Colonic mucosa (tissue), 4 donors: ENCODE measurements at regions of chr6 and their contacts with region 1.

Region 1: DNA sequence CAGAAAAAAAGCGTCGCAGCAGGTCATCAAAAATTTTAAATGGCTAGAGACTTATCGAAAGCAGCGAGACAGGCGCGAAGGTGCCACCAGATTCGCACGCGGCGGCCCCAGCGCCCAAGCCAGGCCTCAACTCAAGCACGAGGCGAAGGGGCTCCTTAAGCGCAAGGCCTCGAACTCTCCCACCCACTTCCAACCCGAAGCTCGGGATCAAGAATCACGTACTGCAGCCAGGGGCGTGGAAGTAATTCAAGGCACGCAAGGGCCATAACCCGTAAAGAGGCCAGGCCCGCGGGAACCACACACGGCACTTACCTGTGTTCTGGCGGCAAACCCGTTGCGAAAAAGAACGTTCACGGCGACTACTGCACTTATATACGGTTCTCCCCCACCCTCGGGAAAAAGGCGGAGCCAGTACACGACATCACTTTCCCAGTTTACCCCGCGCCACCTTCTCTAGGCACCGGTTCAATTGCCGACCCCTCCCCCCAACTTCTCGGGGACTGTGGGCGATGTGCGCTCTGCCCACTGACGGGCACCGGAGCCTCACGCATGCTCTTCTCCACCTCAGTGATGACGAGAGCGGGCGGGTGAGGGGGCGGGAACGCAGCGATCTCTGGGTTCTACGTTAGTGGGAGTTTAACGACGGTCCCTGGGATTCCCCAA is at the start of gene EEF1A1:
- DNase-seq: peak; percentile 100
- H3K4me3 ChIP-seq: peak within 1 kb of the TSS; percentile 77
- H3K27ac ChIP-seq: peak within 1 kb of the TSS; percentile 99
- H3K4me1 ChIP-seq: peaks cover 3% of the 10 kb centered on the region
- H3K27me3 ChIP-seq: no peaks in the 10 kb centered on the region
- CTCF ChIP-seq: no peak
- total RNA-seq, gene EEF1A1: 7,049 to 8,990 TPM

Region 2: GRCh38 chr6:73461537-73462350 is 59.1 kb before region 1 on chr6 and contains the start of gene MTO1:
- intact Hi-C with region 1: loop called (anchors 5 kb)
- DNase-seq: peak; percentile 96
- H3K4me3 ChIP-seq: peak within 1 kb of the TSS; percentile 69
- H3K27ac ChIP-seq: peak within 1 kb of the TSS; percentile 86
- H3K4me1 ChIP-seq: peaks cover 6% of the 10 kb centered on the region
- H3K27me3 ChIP-seq: no peaks in the 10 kb centered on the region
- CTCF ChIP-seq: no peak
- total RNA-seq, gene MTO1: 25.5 to 29.2 TPM

Region 3: GRCh38 chr6:73608761-73609160 is 87.9 kb after region 1 on chr6:
- intact Hi-C with region 1: loop called (anchors 2 kb)
- DNase-seq: no peak
- H3K4me3 ChIP-seq: no peak overlapping the region
- H3K27ac ChIP-seq: no peak overlapping the region
- H3K4me1 ChIP-seq: no peaks in the 10 kb centered on the region
- H3K27me3 ChIP-seq: no peaks in the 10 kb centered on the region
- CTCF ChIP-seq: no peak